ENCODE measurements at regions of chr16 and their contacts with region 1.

Region 1: DNA sequence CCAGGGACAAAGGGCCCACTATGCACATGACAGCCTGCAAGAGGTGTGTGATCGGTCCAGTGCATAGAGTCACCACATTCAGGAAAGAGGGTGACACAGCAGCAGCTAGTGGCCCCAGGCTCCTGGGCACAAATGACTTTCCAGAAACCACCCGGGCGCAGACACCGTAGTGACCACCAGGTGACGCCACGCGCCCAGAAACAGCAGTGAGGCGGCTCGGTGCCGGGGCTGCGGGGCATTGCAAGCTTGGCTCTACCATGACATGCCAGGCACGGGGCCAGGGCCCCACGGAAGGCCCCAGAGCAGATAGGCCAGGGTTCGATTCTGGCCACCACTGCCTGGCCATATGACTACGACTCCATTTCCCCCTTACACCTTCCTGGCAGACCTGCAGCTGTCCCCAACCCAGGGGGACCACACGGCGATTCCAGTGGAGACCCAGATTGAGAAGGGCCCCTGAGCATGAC is 6.7 kb downstream of the RHBDF1 start:
- DNase-seq: peak; percentile 59
- ATAC-seq: peak; percentile 79
- H3K4me3 ChIP-seq: no peak overlapping the region
- H3K27ac ChIP-seq: no peak overlapping the region
- H3K4me1 ChIP-seq: peaks cover 38% of the 10 kb centered on the region
- H3K27me3 ChIP-seq: no peaks in the 10 kb centered on the region
- CTCF ChIP-seq: peak; percentile 99
- POLR2A ChIP-seq: 0 out of 2 replicates have a peak, but pooled peaks have one; percentile 52
- RAD21 ChIP-seq: peak; percentile 99

Region 2: DNA sequence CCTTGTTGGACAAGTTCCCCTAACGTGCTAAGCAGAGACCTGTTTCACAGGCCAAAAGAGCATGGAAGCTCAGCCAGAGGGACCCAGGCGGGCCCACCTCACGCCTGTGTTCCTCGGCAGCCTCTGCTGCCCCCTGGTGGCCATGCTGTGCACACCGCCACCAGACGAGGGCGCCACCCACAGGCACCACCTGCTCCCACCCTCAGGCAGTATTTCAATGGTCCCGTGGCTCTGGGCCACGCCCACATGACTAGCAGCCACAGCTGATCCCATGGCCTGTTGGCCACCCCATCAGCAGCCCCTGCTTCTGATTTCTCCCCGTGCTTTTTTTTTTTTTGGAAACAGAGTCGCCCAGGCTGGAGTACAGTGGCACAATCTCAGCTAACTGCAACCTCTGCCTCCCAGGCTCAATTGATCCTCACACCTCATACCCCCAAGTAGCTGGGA is 31.3 kb after region 1 on chr16:
- CTCF ChIA-PET with region 1: interaction called, 24 read pairs
- POLR2A ChIA-PET with region 1: no interaction called
- dilution Hi-C with region 1: no loop called
- in situ Hi-C with region 1: no loop called
- intact Hi-C with region 1: loop called (anchors 1 kb)
- DNase-seq: peak; percentile 83
- ATAC-seq: peak; percentile 89
- H3K4me3 ChIP-seq: no peak overlapping the region
- H3K27ac ChIP-seq: no peak overlapping the region
- H3K4me1 ChIP-seq: peaks cover 3% of the 10 kb centered on the region
- H3K27me3 ChIP-seq: no peaks in the 10 kb centered on the region
- CTCF ChIP-seq: peak; percentile 100
- POLR2A ChIP-seq: peak; percentile 56
- RAD21 ChIP-seq: peak; percentile 92